ENCODE measurements at regions of chr2 and their contacts with region 1.

Region 1: GRCh38 chr2:10072656-10073480 is 7.3 kb downstream of the CYS1 start:
- DNase-seq: peak; percentile 91
- H3K4me3 ChIP-seq: no peak overlapping the region
- H3K27ac ChIP-seq: no peak overlapping the region
- H3K4me1 ChIP-seq: no peaks in the 10 kb centered on the region
- H3K27me3 ChIP-seq: peaks cover 30% of the 10 kb centered on the region
- CTCF ChIP-seq: peak; percentile 87

Region 2: GRCh38 chr2:10097352-10098148 is 24.7 kb after region 1 on chr2:
- CTCF ChIA-PET with region 1: interaction called, 29 read pairs
- POLR2A ChIA-PET with region 1: interaction called, 16 read pairs
- intact Hi-C with region 1: no loop called
- DNase-seq: peak; percentile 71
- H3K4me3 ChIP-seq: no peak overlapping the region
- H3K27ac ChIP-seq: no peak overlapping the region
- H3K4me1 ChIP-seq: no peaks in the 10 kb centered on the region
- H3K27me3 ChIP-seq: no peaks in the 10 kb centered on the region
- CTCF ChIP-seq: peak; percentile 90

Region 3: GRCh38 chr2:10434886-10435819 is 362.3 kb after region 1 on chr2:
- CTCF ChIA-PET with region 1: interaction called, 56 read pairs
- POLR2A ChIA-PET with region 1: no interaction called
- intact Hi-C with region 1: loop called (anchors 1 kb)
- DNase-seq: peak; percentile 84
- H3K4me3 ChIP-seq: no peak overlapping the region
- H3K27ac ChIP-seq: no peak overlapping the region
- H3K4me1 ChIP-seq: no peaks in the 10 kb centered on the region
- H3K27me3 ChIP-seq: no peaks in the 10 kb centered on the region
- CTCF ChIP-seq: peak; percentile 96

Region 4: GRCh38 chr2:10659898-10660568 is 587.2 kb after region 1 on chr2:
- CTCF ChIA-PET with region 1: no interaction called
- POLR2A ChIA-PET with region 1: no interaction called
- intact Hi-C with region 1: loop called (anchors 10 kb)
- DNase-seq: peak; percentile 19
- H3K4me3 ChIP-seq: no peak overlapping the region
- H3K27ac ChIP-seq: no peak overlapping the region
- H3K4me1 ChIP-seq: no peaks in the 10 kb centered on the region
- H3K27me3 ChIP-seq: no peaks in the 10 kb centered on the region
- CTCF ChIP-seq: peak; percentile 70